ENCODE measurements at regions of chr4 and their contacts with region 1.

Region 1: DNA sequence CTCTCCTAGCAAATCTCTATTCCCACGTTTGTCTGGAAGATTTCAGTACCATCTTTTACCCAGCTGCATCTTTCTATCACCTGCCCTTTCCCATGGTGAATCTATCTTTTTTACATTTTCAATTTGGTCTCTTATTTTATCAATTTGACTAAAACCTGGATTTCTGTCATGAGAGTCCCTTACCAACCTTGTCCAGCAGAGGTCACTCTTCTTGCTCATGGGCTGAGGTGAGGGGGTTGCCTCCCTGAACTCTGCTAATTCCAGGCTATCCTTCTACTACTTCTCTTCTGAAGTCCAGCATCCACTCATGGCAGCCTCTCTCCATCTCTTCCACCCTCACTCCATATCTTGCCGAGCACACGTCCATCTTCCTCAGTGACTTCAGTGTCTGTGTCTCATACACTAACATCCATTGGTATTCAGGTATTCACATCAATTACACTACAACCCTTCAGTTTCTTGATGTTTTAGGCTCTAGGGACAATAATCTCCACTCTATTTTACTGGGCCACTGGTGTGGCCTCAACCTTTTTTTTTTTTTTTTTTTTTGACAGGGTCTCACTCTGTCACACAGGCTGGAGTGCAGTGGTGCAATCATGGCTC is 17.8 kb upstream of the ZNF827 start:
- DNase-seq: no peak
- H3K4me3 ChIP-seq: no peak overlapping the region
- CTCF ChIP-seq: no peak
- POLR2A ChIP-seq: no peak

Region 2: DNA sequence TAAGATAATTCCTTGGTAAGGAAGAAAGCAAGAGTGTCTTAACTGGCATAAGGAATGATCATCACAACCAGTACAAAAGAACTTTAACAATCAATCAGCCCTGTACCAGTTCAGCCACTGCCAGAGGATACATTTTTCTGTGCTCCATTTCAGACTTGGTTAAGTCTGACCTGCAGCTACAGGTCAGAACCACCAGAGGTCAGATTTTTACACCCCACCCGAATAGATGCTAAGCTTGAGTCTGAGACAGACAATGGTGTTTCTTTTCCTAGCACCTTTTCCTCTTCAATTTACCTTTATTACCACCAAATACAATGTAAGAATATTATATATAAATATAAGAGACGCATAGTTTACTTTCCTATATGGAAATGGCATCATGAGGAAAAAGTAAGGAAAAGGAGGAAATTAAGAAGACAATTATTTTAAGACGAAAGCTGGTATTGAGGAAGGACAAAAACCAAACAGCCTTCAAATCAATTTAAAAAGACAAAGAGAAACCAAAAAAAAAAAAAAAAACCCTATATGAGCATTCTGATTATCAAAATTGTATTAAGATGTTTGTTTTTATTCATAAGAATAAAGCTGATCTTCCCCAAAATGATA is 1204.6 kb after region 1 on chr4:
- intact Hi-C with region 1: loop called (anchors 10 kb)
- DNase-seq: no peak
- H3K4me3 ChIP-seq: no peak overlapping the region
- CTCF ChIP-seq: no peak
- POLR2A ChIP-seq: no peak

Measured in lower leg skin (tissue), 4 donors.